ENCODE measurements at regions of chr12 and their contacts with region 1.

Region 1: GRCh38 chr12:65602610-65603295 is 221.5 kb upstream of the HMGA2 start:
- DNase-seq: peak; percentile 77
- ATAC-seq: peak; percentile 91
- H3K4me3 Mint-ChIP-seq: no peak overlapping the region
- H3K27ac Mint-ChIP-seq: no peak overlapping the region
- H3K4me1 Mint-ChIP-seq: peaks cover 29% of the 10 kb centered on the region
- H3K27me3 Mint-ChIP-seq: no peaks in the 10 kb centered on the region
- CTCF ChIP-seq: peak; percentile 60

Region 2: GRCh38 chr12:65556681-65557437 is 45.9 kb before region 1 on chr12:
- CTCF ChIA-PET with region 1: interaction called, 26 read pairs
- POLR2A ChIA-PET with region 1: no interaction called
- DNase-seq: peak; percentile 86
- ATAC-seq: peak; percentile 100
- H3K4me3 Mint-ChIP-seq: no peak overlapping the region
- H3K27ac Mint-ChIP-seq: no peak overlapping the region
- H3K4me1 Mint-ChIP-seq: 0 out of 2 replicates have a peak, but pooled peaks cover 4% of the 10 kb centered on the region
- H3K27me3 Mint-ChIP-seq: peaks cover 6% of the 10 kb centered on the region; the same call in 1 of the 2 replicates
- CTCF ChIP-seq: peak; percentile 77

Region 3: DNA sequence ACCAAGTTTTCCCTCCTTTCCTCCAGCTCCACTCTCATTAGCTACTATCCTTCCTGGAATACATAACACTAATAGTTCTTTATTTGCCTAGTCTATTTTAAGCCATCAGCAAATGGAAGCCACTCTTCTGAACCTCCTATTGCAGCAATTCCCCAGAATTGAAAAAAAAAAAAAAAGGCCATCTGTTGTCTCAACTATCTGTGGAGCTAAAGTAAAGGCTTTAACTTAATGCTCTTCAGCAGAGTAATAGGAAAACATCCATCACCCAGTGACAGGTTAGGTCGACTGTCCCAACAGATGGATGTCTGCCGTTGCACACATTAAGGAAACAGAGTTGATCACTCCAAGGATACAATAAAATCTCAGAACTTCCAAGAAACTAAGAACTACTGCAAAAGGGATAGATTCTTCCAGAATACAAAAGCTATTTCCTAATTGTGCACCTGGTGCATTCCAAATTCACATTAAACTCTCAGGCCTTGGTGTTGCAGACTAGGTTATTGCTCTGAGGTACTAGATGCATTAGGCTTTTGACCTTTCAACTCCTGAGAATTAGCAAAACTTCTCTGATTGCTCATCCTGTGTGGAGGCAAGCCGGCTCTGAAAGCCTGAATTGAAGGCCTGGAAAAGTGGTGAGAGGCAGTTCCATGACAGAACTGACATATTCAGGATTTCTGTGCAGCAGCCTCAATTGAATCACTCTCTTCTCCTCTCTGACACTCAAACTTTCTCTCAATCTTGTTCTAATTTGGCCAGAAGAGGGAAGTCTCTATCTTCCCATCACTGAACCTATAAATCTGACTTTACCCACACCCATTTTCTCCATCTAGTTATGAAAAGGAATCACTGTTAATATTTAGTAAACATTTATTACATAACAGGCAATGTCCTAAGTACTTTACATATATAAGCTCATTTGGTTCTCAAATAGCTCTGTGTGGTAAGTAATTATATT is 16.8 kb before region 1 on chr12:
- CTCF ChIA-PET with region 1: interaction called, 11 read pairs
- POLR2A ChIA-PET with region 1: no interaction called
- DNase-seq: no peak
- ATAC-seq: no peak
- H3K4me3 Mint-ChIP-seq: no peak overlapping the region
- H3K27ac Mint-ChIP-seq: no peak overlapping the region
- H3K4me1 Mint-ChIP-seq: no peaks in the 10 kb centered on the region
- H3K27me3 Mint-ChIP-seq: no peaks in the 10 kb centered on the region
- CTCF ChIP-seq: no peak

Region 4: DNA sequence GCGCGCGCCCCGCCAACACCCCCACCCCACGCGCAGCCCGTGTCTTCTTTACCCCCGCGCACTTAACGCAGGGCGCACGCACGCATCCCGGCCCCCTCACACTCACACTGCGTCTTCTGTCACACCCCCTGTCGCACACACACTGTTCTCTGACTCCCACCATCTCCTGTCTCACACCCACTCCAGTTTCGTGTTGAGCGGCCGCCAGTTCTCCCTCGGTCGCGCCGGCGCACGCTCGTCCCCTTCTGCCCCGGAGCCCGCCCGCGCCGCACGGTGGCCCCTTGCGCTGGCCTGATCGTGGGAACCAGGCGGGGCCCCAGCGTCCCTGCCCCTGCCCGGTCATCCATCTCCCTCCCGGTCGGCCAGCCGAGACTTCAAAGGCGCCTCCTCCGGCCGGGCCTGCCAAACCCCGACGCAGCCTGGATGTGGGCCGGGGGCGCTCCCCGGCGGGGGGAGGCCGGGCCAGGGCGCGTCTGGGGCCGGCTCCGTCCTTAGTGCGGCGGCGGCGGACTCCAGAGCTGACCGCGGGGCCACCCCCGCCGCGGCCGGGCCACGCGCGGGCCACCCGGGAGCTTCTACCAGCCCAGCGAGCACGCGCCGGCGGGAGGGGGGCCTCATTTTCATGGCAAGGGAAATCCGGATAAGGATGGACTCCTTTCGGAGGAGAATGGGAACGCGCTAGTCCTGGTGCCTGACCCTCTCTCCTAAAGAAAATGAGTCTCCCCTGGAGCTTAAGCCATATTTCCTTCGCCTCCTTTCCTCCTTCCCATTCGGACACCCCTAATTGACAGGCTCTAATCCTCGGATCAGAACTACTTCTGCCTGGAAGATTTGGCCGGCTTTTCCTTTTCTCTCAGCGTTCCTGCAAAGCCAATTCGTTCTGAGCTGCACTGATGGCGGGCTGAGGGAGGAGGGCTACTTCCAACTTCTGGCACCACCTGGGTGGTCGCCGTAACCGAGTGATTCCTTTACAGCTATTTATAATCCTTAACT is 139.6 kb after region 1 on chr12:
- CTCF ChIA-PET with region 1: interaction called, 13 read pairs
- POLR2A ChIA-PET with region 1: interaction called, 3 read pairs
- DNase-seq: peak; percentile 78
- ATAC-seq: peak; percentile 64
- H3K4me3 Mint-ChIP-seq: peak overlapping the region; percentile 89
- H3K27ac Mint-ChIP-seq: peak overlapping the region; percentile 84
- H3K4me1 Mint-ChIP-seq: peaks cover 41% of the 10 kb centered on the region
- H3K27me3 Mint-ChIP-seq: peaks cover 15% of the 10 kb centered on the region
- CTCF ChIP-seq: no peak

Region 5: GRCh38 chr12:65823513-65824375 is 221.0 kb after region 1 on chr12:
- CTCF ChIA-PET with region 1: interaction called, 10 read pairs
- POLR2A ChIA-PET with region 1: no interaction called
- DNase-seq: peak; percentile 73
- ATAC-seq: peak; percentile 10
- H3K4me3 Mint-ChIP-seq: peak overlapping the region; percentile 82
- H3K27ac Mint-ChIP-seq: peak overlapping the region; percentile 97
- H3K4me1 Mint-ChIP-seq: peaks cover 39% of the 10 kb centered on the region
- H3K27me3 Mint-ChIP-seq: no peaks in the 10 kb centered on the region
- CTCF ChIP-seq: no peak

Region 6: DNA sequence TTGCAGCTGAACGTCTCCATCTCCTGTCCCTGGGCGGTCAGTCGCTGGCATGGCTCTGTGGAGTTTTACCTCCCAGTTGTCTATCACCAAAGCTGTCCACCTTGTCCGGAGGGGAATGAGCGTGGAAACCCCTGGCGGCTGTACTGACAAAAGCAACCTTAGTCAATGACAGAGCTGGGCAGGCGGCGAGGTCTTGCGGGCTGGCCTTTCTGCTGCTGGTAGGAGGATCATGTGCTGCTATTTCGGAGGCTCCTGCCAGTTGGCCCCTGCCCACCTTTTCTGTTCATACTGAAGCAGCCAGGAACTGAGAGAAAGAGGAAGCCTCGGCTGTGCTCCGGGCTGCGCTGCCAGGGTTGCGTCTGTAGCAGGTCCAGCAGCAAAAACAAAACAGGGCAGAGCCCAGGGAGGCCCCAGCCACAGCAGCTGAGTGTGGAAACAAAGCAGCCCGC is 279.2 kb after region 1 on chr12:
- CTCF ChIA-PET with region 1: interaction called, 11 read pairs
- POLR2A ChIA-PET with region 1: no interaction called
- DNase-seq: peak; percentile 25
- ATAC-seq: peak; percentile 40
- H3K4me3 Mint-ChIP-seq: peak overlapping the region; percentile 13; the same call in 1 of the 2 replicates
- H3K27ac Mint-ChIP-seq: peak overlapping the region; percentile 68
- H3K4me1 Mint-ChIP-seq: peaks cover 70% of the 10 kb centered on the region
- H3K27me3 Mint-ChIP-seq: no peaks in the 10 kb centered on the region
- CTCF ChIP-seq: no peak

Region 7: DNA sequence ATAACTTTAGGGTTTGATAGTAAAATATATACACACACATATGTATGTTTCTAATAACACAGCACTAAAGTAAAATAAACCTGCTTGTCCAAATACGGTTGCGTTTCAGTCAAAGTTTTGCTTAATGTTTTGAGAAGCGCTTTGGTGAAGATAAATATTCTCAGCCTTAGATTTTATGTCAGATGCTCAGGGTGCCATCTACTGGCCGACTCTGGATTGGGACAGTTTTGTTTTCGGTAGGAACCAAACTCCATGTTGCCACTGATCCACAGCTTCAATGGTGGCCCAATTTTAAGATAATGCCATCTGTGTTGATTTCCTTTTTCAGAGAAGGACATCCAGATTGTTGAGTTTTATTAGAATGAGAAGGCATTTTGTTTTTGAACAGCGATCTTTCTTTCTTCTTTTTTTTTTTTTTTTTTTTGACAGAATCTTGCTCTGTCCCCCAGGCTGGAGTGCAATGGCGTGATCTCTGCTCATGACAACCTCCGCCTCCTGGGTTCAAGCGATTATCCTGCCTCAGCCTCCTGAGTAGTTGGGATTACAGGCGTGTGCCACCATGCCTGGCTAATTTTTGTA is 484.7 kb after region 1 on chr12:
- CTCF ChIA-PET with region 1: interaction called, 13 read pairs
- POLR2A ChIA-PET with region 1: no interaction called
- DNase-seq: peak; percentile 68
- ATAC-seq: peak; percentile 65
- H3K4me3 Mint-ChIP-seq: no peak overlapping the region
- H3K27ac Mint-ChIP-seq: no peak overlapping the region
- H3K4me1 Mint-ChIP-seq: peaks cover 3% of the 10 kb centered on the region
- H3K27me3 Mint-ChIP-seq: no peaks in the 10 kb centered on the region
- CTCF ChIP-seq: peak; percentile 47; the same call in 1 of the 2 replicates